ENCODE measurements at regions of chr14 and their contacts with region 1.

Region 1: DNA sequence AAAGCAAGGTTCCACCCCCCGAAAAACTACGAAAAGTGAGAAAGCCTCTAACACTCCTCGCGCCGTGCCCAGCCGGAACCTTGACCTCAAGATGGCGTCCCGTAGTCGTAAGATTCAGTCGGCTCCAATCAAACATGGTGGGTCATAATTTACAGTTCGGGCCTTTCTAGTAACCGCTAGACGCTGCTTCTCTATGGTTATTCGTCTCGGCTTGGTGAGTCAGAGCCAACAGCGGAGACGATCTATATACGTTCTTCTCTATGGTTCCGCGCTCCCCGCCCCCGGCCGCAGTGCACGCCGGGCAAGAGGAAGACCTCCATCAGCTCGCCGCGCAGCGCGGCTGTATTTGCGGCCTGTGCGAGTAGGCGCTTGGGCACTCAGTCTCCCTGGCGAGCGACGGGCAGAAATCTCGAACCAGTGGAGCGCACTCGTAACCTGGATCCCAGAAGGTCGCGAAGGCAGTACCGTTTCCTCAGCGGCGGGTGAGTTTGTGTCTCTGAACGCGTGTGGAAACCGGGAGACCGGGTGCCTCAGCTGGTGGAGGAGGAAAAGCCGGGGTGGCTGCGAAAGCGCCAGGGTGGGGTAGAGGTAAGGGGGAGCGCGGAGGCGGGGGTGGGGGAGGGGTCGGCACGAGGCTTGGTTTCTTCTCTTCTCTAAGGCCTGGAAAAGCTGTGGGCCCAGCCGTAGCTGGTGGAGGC is at the start of gene RBM25:
- DNase-seq: peak; percentile 95
- H3K4me3 Mint-ChIP-seq: no peak within 1 kb of the TSS
- H3K27ac Mint-ChIP-seq: no peak within 1 kb of the TSS
- H3K4me1 Mint-ChIP-seq: no peaks in the 10 kb centered on the region
- H3K27me3 Mint-ChIP-seq: no peaks in the 10 kb centered on the region
- CTCF ChIP-seq: no peak
- total RNA-seq, gene RBM25: 87.5 and 94.2 TPM in 2 replicates

Region 2: GRCh38 chr14:72692696-72693095 is 365.7 kb before region 1 on chr14:
- CTCF ChIA-PET with region 1: no interaction called
- intact Hi-C with region 1: no loop called
- DNase-seq: peak; percentile 8
- H3K4me3 Mint-ChIP-seq: no peak overlapping the region
- H3K27ac Mint-ChIP-seq: no peak overlapping the region
- H3K4me1 Mint-ChIP-seq: no peaks in the 10 kb centered on the region
- H3K27me3 Mint-ChIP-seq: no peaks in the 10 kb centered on the region
- CTCF ChIP-seq: no peak

Region 3: DNA sequence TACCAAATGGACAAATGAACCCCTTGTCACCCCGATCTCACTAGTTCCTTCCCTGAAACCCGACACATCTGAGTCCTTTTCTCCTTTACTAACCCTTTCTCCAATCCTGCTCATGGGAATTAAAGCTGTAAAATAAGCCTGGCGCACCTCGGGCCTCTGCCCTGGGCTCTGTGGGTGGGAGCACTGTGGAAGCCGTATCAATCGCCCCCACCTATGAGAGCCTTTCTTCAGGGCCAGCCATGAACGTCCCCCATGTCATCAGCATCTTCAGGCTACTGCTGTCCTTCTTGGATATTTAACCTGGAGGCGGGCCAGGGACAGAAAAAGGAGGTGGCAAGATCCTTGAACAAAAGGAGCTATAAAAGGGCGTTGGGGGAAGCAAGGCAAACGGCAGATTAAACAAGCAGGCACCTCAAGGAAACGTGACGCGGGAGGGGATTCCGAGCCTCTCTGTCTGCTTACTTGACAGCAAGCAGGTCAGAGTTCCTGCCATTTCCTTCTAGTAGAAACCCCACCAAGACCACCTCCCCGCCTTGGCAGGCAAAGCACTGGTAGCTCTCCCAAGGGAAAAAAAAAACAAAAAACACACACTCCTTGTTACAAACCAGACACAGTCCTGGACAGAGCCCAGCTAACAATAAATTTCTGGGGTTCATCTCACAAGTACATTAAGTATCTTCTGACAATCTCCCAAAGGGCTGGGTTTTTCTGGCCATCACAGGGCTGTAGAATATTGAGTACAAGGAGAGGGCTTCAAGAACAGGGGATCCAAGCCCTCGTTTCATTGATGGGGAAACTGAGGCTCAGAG is 227.4 kb before region 1 on chr14:
- CTCF ChIA-PET with region 1: no interaction called
- intact Hi-C with region 1: no loop called
- DNase-seq: no peak
- H3K4me3 Mint-ChIP-seq: no peak overlapping the region
- H3K27ac Mint-ChIP-seq: no peak overlapping the region
- H3K4me1 Mint-ChIP-seq: no peaks in the 10 kb centered on the region
- H3K27me3 Mint-ChIP-seq: peaks cover 27% of the 10 kb centered on the region
- CTCF ChIP-seq: no peak

Region 4: DNA sequence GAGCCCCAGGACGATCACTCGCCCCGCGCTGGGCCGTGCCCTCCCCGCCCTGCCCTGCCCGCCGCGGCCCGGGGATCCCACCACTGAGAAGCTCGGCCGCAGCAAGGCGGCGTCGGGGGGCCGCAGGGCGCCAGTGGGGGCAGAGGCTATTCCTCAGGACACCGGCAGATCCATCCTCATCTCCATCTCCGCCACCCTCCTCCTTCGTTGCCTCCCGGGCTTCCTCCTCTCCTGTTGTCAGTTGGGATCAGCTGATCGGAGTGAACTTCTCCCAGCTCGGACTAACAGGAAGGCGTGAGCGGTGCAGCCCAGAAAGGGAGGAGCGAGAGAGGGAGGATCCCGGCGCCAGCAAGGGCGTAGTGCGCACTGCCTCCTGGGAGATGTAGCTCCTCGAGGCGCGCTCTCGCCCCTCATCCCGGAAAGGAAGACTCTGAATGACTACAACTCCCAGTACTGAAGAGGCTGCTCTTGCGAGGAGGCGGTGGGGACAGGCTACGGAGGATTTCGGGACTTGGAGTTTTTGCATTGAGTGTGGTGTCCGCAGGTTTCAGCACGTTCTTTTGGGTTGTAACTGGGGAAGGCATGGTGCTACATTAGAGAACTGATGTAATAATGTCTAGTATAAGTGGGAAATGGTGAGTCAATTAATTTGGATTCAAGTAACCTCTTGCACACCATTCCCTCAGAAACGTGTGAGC is 31.4 kb before region 1 on chr14 and contains the start of gene ZFYVE1:
- CTCF ChIA-PET with region 1: interaction called, 15 read pairs
- intact Hi-C with region 1: no loop called
- DNase-seq: peak; percentile 95
- H3K4me3 Mint-ChIP-seq: peak within 1 kb of the TSS; percentile 80
- H3K27ac Mint-ChIP-seq: peak within 1 kb of the TSS; percentile 66
- H3K4me1 Mint-ChIP-seq: peaks cover 7% of the 10 kb centered on the region
- H3K27me3 Mint-ChIP-seq: no peaks in the 10 kb centered on the region
- CTCF ChIP-seq: no peak
- total RNA-seq, gene ZFYVE1: 10.6 and 11.9 TPM in 2 replicates

Region 5: DNA sequence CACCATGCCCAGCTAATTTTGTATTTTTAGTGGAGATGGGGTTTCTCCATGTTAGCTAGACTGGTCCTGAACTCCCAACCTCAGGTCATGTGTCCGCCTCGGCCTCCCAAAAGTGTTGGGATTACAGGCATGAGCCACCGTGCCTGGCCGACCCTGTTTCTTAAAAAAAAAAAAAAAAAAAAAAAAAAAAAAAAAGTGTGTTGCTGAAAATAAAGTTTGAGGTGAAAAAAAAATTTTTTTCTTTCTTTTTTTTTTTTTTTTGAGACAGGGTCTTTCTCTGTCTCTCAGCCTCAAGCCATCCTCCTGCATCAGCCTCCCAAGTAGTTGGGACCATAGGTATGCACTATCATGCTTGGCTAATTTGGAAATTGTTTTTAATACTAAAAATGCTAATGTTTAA is 11.2 kb after region 1 on chr14:
- CTCF ChIA-PET with region 1: interaction called, 11 read pairs
- intact Hi-C with region 1: no loop called
- DNase-seq: no peak
- H3K4me3 Mint-ChIP-seq: no peak overlapping the region
- H3K27ac Mint-ChIP-seq: no peak overlapping the region
- H3K4me1 Mint-ChIP-seq: no peaks in the 10 kb centered on the region
- H3K27me3 Mint-ChIP-seq: no peaks in the 10 kb centered on the region
- CTCF ChIP-seq: no peak